Panc1 (cell line): ENCODE measurements at regions of chr12 and their contacts with region 1.

Region 1: GRCh38 chr12:50006789-50007436 is 18.4 kb downstream of the RACGAP1 start:
- DNase-seq: no peak
- ATAC-seq: peak; percentile 73
- H3K4me3 ChIP-seq: no peak overlapping the region
- H3K27ac ChIP-seq: peak overlapping the region; percentile 61
- H3K4me1 ChIP-seq: peaks cover 16% of the 10 kb centered on the region
- H3K27me3 ChIP-seq: no peaks in the 10 kb centered on the region
- CTCF ChIP-seq: no peak

Region 2: DNA sequence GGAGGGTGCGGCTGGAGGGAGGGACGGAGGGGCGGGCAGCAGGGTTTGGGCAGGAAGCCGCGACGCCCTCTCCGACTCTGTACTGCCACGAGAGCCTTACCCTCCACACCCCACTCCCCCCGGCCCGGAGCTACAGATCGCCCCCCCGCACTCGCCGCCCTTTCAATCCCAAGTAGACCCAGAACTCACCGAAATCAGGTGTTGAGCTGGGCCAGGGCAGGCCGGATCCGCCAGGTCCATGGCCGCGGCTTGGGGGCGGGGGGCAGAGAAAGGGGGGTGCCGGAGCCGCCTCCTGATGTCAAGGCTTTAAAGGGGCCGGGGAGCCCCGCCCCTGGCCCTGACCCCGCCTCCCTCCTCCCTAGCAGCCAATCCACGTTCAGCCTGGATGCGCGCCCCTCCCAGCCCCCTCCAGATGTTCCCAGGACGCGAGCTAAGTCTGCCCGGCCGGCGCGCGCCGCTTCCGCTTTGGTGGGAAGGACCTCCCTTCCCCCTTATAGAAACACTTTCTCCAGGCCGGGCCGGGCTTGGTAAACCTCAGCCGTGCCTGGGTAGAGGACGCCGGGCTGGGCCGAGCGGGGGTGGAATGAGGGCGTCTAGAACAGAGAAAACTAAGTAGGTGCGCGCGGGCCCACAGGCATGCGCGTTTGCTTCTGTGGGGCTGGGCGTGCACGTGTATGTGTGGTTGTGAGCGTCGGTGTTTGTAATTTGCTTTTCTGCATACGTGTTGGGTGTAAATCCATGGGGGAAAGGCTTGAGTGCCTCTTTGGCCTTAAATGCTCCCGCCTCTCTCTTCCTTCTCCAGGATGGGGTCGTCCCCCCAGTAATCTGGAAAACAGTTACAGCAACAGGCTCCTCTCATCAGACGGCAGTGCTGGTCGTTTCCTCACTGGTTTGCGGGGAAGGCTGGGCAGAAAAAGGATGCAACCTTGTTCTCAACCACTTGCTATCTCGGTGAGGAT is 178.5 kb before region 1 on chr12 and contains the start of gene NCKAP5L:
- CTCF ChIA-PET with region 1: no interaction called
- POLR2A ChIA-PET with region 1: no interaction called
- in situ Hi-C with region 1: no loop called
- intact Hi-C with region 1: no loop called
- DNase-seq: no peak
- ATAC-seq: peak; percentile 97
- H3K4me3 ChIP-seq: peak within 1 kb of the TSS; percentile 65 to 67
- H3K27ac ChIP-seq: peak within 1 kb of the TSS; percentile 83
- H3K4me1 ChIP-seq: peaks cover 21% of the 10 kb centered on the region
- H3K27me3 ChIP-seq: no peaks in the 10 kb centered on the region
- CTCF ChIP-seq: no peak
- total RNA-seq, gene NCKAP5L: 17.3 TPM

Region 3: DNA sequence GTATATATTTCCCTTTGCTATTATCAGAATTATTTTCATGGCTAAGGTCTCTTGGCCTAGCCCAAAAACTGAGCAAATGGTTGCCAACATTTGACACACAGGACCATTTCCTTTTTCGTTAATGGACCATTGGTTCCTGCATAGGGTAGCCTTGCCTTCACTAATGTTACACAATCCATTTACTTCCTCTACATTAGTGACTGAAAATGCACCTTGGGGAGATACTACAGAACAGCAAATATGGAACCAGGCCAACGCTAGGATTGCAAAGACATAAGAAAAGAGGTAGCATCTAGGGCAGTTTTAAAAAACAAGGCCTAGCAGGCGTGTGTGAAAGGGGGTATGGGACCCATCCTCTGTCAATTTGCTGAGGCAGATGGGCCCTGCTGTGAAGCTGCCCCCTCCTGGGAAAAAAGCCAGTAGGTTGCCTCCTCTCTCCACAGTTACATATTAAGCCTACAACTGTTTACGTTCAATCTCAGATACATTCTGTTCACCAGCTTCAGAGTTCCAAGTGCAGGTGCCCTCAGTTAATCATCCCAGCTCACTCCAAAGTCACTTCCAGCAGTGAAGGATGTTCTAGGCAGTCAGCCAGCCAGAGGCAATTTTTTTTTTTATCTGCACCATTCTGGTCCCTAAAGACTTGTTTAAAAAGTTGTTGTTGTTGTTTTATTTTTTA is 19.1 kb before region 1 on chr12:
- CTCF ChIA-PET with region 1: interaction called, 12 read pairs
- POLR2A ChIA-PET with region 1: no interaction called
- in situ Hi-C with region 1: no loop called
- intact Hi-C with region 1: no loop called
- DNase-seq: no peak
- ATAC-seq: no peak
- H3K4me3 ChIP-seq: no peak overlapping the region
- H3K27ac ChIP-seq: no peak overlapping the region
- H3K4me1 ChIP-seq: peaks cover 4% of the 10 kb centered on the region
- H3K27me3 ChIP-seq: no peaks in the 10 kb centered on the region
- CTCF ChIP-seq: no peak